Caco-2 (cell line): ENCODE measurements at regions of chr3 and their contacts with region 1.

Region 1: GRCh38 chr3:176147253-176147652 is 1050.0 kb downstream of the TBL1XR1 start:
- DNase-seq: peak; percentile 35 to 41
- H3K4me3 ChIP-seq: no peak overlapping the region
- H3K4me3 Mint-ChIP-seq: no peak overlapping the region
- H3K27ac Mint-ChIP-seq: no peak overlapping the region
- H3K4me1 ChIP-seq: no peaks in the 10 kb centered on the region; the same call in 1 of the 2 replicates
- H3K4me1 Mint-ChIP-seq: peaks cover 13% of the 10 kb centered on the region
- H3K27me3 ChIP-seq: no peaks in the 10 kb centered on the region
- H3K27me3 Mint-ChIP-seq: no peaks in the 10 kb centered on the region
- CTCF ChIP-seq: no peak

Region 2: GRCh38 chr3:176088962-176089383 is 58.3 kb before region 1 on chr3:
- CTCF ChIA-PET with region 1: no interaction called
- POLR2A ChIA-PET with region 1: no interaction called
- intact Hi-C with region 1: loop called (anchors 1 kb)
- DNase-seq: peak in 1 of 2 experiments; percentile 33
- H3K4me3 ChIP-seq: no peak overlapping the region
- H3K4me3 Mint-ChIP-seq: no peak overlapping the region
- H3K27ac Mint-ChIP-seq: no peak overlapping the region
- H3K4me1 ChIP-seq: peaks cover 20% of the 10 kb centered on the region
- H3K4me1 Mint-ChIP-seq: peaks cover 12% of the 10 kb centered on the region
- H3K27me3 ChIP-seq: no peaks in the 10 kb centered on the region
- H3K27me3 Mint-ChIP-seq: no peaks in the 10 kb centered on the region
- CTCF ChIP-seq: no peak

Region 3: GRCh38 chr3:176247191-176247590 is 99.9 kb after region 1 on chr3:
- CTCF ChIA-PET with region 1: no interaction called
- POLR2A ChIA-PET with region 1: no interaction called
- intact Hi-C with region 1: no loop called
- DNase-seq: no peak
- H3K4me3 ChIP-seq: no peak overlapping the region
- H3K4me3 Mint-ChIP-seq: no peak overlapping the region
- H3K27ac Mint-ChIP-seq: no peak overlapping the region
- H3K4me1 ChIP-seq: 0 out of 2 replicates have a peak, but pooled peaks cover 4% of the 10 kb centered on the region
- H3K4me1 Mint-ChIP-seq: no peaks in the 10 kb centered on the region
- H3K27me3 ChIP-seq: no peaks in the 10 kb centered on the region
- H3K27me3 Mint-ChIP-seq: no peaks in the 10 kb centered on the region
- CTCF ChIP-seq: no peak